PC-9 (cell line): ENCODE measurements at regions of chr1 and their contacts with region 1.

Region 1: DNA sequence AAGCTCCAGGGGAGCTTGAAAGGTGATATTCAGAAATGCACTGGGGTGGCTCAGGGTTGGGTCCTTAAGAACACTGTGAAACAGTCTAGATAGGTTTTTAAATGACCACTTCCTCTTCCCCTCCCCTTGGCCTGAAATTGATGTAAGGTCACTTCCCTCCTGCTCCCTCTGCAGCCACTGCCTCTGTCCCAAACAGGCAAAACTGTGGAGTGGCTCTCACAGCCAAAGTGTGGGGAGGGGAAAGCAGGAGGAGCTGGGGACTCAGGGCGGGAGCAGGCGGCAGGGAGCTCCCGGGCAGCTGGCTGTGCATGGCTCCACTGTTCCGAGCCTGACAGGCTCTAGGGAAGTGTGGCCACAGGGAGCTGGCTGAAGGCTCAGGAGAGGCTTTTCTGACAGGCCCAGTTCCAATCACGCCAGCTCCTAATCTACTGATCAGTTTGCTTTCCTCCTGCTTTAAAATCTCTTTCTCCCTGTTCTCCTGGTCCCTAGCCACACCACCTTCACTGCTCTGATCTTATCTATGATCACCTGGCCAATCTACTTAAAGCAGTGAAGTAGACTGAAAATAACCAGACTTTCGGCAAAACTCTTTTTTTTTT is 5.1 kb upstream of the CSRP1 start:
- DNase-seq: peak in 1 of 2 experiments; percentile 24
- H3K4me3 ChIP-seq: no peak overlapping the region
- H3K27ac ChIP-seq: no peak overlapping the region
- H3K4me1 ChIP-seq: peaks cover 48% of the 10 kb centered on the region
- H3K27me3 ChIP-seq: no peaks in the 10 kb centered on the region
- CTCF ChIP-seq: no peak

Region 2: DNA sequence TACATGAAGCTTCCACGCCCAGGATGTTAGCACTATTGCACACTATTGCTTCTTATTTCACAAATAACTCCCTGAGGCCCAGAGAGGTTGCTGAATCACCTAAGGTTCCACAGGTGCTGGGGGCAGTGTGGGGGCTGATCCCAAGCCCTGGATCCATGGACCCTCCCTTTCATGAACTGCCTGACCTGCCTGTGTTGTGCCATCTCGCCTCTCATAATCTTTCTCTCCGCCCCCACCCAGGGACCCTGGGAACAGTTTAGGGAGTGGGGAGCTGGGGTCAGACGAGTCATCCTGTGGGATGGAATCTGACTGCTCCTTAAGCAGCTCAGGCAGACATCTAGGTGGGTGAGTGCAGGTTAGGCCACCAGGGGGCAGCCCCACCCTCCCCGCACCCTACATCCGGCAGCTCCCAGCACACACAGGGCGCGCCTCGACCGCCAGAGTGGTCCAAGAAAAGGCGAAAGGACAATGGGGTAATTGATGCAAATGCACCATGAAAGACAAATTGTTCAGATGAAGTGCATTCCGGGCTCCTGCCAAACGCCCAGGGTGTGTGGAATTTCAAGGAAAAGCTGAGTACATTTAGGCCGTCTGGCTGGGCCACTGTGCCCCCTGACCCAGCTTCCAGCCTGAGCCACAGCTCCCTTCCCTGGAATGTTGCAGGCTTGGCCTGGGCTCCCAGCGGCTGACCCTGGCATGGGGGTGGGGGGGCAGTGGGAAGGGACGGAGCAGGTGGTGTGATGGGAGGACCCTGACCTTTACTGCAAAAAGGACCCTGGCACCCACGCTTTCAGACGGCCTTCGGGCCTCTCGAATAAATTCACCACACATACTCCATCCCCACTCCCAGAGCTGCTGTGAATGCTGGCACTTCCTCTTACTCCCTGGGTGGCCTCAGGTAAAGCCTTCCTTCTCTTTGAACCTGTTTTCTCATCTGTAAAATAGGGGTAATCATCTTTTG is 63.8 kb before region 1 on chr1:
- CTCF ChIA-PET with region 1: interaction called, 23 read pairs
- POLR2A ChIA-PET with region 1: no interaction called
- intact Hi-C with region 1: loop called (anchors 1 kb)
- DNase-seq: peak; percentile 65 to 72
- H3K4me3 ChIP-seq: no peak overlapping the region
- H3K27ac ChIP-seq: peak overlapping the region; percentile 38
- H3K4me1 ChIP-seq: peaks cover 22% of the 10 kb centered on the region
- H3K27me3 ChIP-seq: no peaks in the 10 kb centered on the region
- CTCF ChIP-seq: peak; percentile 92

Region 3: DNA sequence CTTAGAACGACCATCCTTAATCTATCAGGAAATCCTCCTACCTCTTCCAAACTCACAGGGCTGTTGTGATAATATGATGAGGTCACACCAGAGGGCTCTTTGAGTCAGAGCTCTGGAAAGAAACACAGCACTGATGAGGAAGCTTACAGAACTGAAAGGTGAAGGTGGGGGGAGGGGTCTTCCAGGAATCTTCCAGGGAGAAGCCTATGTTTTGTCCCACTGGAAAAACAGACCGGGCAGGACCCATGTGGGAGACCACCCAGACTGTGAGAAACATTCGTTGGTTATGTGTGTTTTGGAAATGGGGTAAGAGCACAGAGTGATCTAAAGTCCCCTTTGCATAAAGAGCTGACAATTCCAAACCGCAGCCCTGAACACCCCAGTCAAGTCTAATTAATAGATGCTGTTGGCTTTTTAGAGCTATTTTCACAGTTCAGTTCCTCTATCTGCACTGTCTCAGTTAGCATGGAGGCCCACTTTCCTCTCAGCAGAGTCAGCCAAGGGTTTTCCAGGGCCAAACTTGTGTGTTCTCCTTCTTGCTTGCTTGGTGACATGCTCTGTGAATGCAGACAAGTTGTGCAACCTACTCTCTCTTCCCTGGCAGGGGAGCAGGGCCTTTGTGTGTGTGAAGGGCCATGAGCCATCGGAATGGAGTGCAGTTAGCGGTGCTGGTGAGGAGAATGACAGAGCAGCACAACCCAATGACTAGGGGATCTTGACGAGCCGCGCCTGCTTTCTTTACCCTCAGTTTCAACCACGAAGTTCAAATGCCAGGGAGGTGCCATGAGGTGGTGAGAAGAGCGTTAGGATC is 55.3 kb before region 1 on chr1:
- CTCF ChIA-PET with region 1: interaction called, 8 read pairs
- POLR2A ChIA-PET with region 1: interaction called, 26 read pairs
- intact Hi-C with region 1: loop called (anchors 2 kb)
- DNase-seq: peak; percentile 76 to 96
- H3K4me3 ChIP-seq: no peak overlapping the region
- H3K27ac ChIP-seq: peak overlapping the region; percentile 95
- H3K4me1 ChIP-seq: peaks cover 56% of the 10 kb centered on the region
- H3K27me3 ChIP-seq: no peaks in the 10 kb centered on the region
- CTCF ChIP-seq: no peak

Region 4: DNA sequence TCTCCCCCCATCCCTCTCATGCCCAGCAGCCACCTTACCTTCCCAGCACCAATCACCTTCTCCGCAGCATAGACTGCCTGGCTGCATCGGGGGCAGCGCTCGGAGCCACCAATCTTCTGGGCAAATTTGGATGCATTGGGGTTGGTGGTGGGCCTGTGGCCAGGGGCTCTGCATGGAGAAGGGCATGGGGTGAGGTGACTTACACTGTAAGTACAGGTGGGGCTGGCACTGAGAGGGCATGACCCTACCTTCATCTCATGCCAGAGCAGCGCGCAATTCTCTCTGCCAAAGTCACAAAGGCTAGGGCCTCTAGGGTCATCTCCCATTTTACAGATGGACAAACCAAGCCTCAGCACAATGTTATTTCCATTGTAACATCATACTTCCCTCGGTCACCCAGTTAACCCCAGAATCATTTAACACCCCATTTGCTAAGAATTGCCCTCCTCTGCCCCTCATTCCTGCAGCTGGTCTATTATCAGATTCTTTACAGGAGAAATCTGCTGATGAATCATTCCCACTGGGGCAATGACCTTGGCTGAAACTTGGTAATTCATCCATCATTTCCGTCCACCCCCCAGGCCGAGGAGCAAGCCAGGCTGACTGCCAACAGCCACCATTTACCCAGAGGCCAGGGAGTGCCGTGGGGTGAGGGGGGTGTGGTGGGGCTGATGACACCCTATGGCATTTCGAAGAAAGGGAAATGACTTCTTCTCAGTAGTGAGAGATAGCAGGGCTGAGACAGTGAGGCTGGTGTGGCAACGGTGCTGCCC is 23.0 kb before region 1 on chr1:
- CTCF ChIA-PET with region 1: interaction called, 12 read pairs
- POLR2A ChIA-PET with region 1: interaction called, 5 read pairs
- intact Hi-C with region 1: loop called (anchors 1 kb)
- DNase-seq: peak; percentile 92 to 95
- H3K4me3 ChIP-seq: no peak overlapping the region
- H3K27ac ChIP-seq: peak overlapping the region; percentile 78
- H3K4me1 ChIP-seq: peaks cover 43% of the 10 kb centered on the region
- H3K27me3 ChIP-seq: no peaks in the 10 kb centered on the region
- CTCF ChIP-seq: no peak

Region 5: DNA sequence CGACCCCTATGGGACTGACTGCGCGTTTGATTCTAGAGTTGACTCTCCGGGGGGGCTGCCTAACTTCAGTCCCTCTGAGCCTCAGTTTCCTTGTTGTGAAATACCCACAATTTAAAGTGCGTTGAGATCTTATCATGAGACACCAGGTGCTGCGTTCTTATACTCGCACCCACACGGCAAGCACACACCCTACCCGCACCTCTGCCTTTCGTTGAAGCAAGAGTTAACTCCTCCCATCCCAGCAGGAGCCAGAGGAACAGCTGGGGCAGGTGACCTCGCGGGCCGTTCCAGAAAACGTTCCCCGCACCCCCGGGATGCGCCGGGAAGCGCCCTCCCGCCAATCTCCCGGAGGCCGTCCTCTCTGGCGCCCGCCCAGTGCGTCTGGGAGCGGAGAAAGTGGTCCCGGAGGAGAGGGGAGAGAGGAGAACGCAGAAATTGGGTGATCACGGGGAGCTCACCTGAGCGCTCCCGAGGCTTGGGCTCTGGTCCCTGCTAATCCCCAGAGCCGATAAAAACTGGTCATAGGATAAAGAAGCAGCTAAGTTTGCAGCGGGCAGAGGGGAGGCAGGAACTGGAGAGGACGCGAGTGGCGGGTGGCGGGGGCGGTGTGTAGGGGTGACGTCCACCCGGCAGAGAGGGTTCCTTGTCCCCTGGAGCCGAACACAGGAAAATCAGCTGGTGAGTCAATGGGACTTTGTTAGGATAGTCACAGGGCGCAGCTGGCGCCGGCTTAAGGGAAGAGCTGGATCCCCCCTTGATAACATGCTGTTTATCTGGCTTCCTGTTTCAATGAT is 27.7 kb after region 1 on chr1:
- CTCF ChIA-PET with region 1: interaction called, 11 read pairs
- POLR2A ChIA-PET with region 1: no interaction called
- intact Hi-C with region 1: no loop called
- DNase-seq: peak; percentile 25 to 47
- H3K4me3 ChIP-seq: peak overlapping the region; percentile 81
- H3K27ac ChIP-seq: peak overlapping the region; percentile 35
- H3K4me1 ChIP-seq: peaks cover 46% of the 10 kb centered on the region
- H3K27me3 ChIP-seq: no peaks in the 10 kb centered on the region
- CTCF ChIP-seq: no peak

Region 6: GRCh38 chr1:202056644-202057461 is 544.8 kb after region 1 on chr1:
- CTCF ChIA-PET with region 1: no interaction called
- POLR2A ChIA-PET with region 1: no interaction called
- intact Hi-C with region 1: no loop called
- DNase-seq: peak; percentile 97 to 98
- H3K4me3 ChIP-seq: no peak overlapping the region
- H3K27ac ChIP-seq: peak overlapping the region; percentile 98
- H3K4me1 ChIP-seq: peaks cover 64% of the 10 kb centered on the region
- H3K27me3 ChIP-seq: no peaks in the 10 kb centered on the region
- CTCF ChIP-seq: no peak